ENCODE measurements at regions of chr20 and their contacts with region 1.

Region 1: GRCh38 chr20:5569021-5569420 is 181.2 kb upstream of the SHLD1 start:
- DNase-seq: no peak
- ATAC-seq: peak; percentile 85
- H3K4me3 ChIP-seq: no peak overlapping the region
- H3K27ac ChIP-seq: no peak overlapping the region
- H3K4me1 ChIP-seq: no peaks in the 10 kb centered on the region
- H3K27me3 ChIP-seq: no peaks in the 10 kb centered on the region
- CTCF ChIP-seq: peak; percentile 34 to 62 (median 38); a peak in 5 of 6 replicates
- EP300 ChIP-seq: no peak
- POLR2A ChIP-seq: no peak
- RAD21 ChIP-seq: peak; percentile 78

Region 2: GRCh38 chr20:5400164-5400762 is 168.8 kb before region 1 on chr20:
- CTCF ChIA-PET with region 1: no interaction called
- POLR2A ChIA-PET with region 1: no interaction called
- RAD21 ChIA-PET with region 1: no interaction called
- SMC1A ChIA-PET with region 1: no interaction called
- in situ Hi-C with region 1: no loop called
- intact Hi-C with region 1: no loop called
- DNase-seq: no peak
- ATAC-seq: no peak
- H3K4me3 ChIP-seq: no peak overlapping the region
- H3K27ac ChIP-seq: no peak overlapping the region
- H3K4me1 ChIP-seq: no peaks in the 10 kb centered on the region
- H3K27me3 ChIP-seq: no peaks in the 10 kb centered on the region
- CTCF ChIP-seq: no peak
- EP300 ChIP-seq: no peak
- POLR2A ChIP-seq: no peak
- RAD21 ChIP-seq: no peak

Region 3: DNA sequence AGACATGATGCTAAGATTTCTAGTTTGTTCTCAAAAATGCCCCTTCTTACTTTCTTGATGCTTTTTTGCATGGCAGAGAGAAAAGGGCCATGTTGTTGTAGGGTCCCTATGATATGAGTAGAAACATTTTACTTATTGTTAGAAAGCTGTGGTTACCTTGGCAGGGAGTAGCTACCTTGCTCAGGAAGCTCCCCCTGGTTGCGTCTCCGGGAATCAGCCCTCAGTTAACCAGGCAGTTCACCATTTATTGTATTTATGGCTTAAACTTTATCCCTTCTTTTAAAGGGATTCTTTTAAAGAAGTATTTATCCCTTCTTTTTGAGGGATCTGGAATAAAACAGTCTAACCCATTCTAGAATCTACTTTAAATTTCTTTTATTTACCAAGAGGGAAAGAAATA is 138.4 kb before region 1 on chr20:
- CTCF ChIA-PET with region 1: no interaction called
- POLR2A ChIA-PET with region 1: no interaction called
- RAD21 ChIA-PET with region 1: no interaction called
- SMC1A ChIA-PET with region 1: no interaction called
- in situ Hi-C with region 1: no loop called
- intact Hi-C with region 1: no loop called
- DNase-seq: no peak
- ATAC-seq: no peak
- H3K4me3 ChIP-seq: no peak overlapping the region
- H3K27ac ChIP-seq: no peak overlapping the region
- H3K4me1 ChIP-seq: no peaks in the 10 kb centered on the region
- H3K27me3 ChIP-seq: 0 out of 4 replicates have a peak, but pooled peaks cover 0 to 2% of the 10 kb centered on the region in 2 experiments
- CTCF ChIP-seq: no peak
- EP300 ChIP-seq: no peak
- POLR2A ChIP-seq: no peak
- RAD21 ChIP-seq: no peak

Region 4: DNA sequence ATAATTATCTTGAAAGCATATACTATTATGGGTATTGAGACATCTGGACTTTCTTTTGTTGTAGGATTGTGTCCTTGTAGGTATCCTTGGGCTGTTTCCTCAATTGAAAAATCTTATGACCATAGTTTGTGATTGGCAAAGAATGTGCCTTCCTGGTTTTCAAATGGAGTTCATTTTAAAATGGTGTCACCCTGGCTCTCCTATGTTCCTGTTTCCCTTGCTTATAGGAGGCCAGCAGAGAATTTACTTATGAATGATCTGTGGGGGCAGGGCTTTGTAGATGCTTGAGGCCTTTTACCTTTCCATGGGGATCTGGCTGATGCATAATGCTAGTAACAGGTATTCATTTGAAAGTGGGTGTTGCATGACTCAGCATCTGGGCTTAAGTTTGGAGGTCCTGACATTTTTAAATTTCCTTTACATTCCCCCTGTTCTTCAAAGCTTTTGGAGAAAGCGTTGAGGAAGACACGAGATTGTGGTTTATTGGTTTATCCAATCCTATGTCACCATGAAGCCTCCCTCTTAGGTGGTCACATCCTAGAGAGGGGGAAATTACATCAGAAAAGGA is 117.3 kb before region 1 on chr20:
- CTCF ChIA-PET with region 1: no interaction called
- POLR2A ChIA-PET with region 1: no interaction called
- RAD21 ChIA-PET with region 1: no interaction called
- SMC1A ChIA-PET with region 1: no interaction called
- in situ Hi-C with region 1: no loop called
- intact Hi-C with region 1: no loop called
- DNase-seq: no peak
- ATAC-seq: no peak
- H3K4me3 ChIP-seq: no peak overlapping the region
- H3K27ac ChIP-seq: no peak overlapping the region
- H3K4me1 ChIP-seq: no peaks in the 10 kb centered on the region
- H3K27me3 ChIP-seq: no peaks in the 10 kb centered on the region
- CTCF ChIP-seq: no peak
- EP300 ChIP-seq: no peak
- POLR2A ChIP-seq: no peak
- RAD21 ChIP-seq: no peak

Region 5: GRCh38 chr20:5504061-5504739 is 64.8 kb before region 1 on chr20:
- CTCF ChIA-PET with region 1: no interaction called
- POLR2A ChIA-PET with region 1: no interaction called
- RAD21 ChIA-PET with region 1: no interaction called
- SMC1A ChIA-PET with region 1: no interaction called
- in situ Hi-C with region 1: no loop called
- intact Hi-C with region 1: no loop called
- DNase-seq: no peak
- ATAC-seq: peak; percentile 53
- H3K4me3 ChIP-seq: peak overlapping the region; percentile 31; the same call in 1 of the 2 replicates
- H3K27ac ChIP-seq: no peak overlapping the region
- H3K4me1 ChIP-seq: no peaks in the 10 kb centered on the region
- H3K27me3 ChIP-seq: peaks cover 0 to 1% of the 10 kb centered on the region in 2 experiments; a peak in 1 of 4 replicates
- CTCF ChIP-seq: no peak
- EP300 ChIP-seq: no peak
- POLR2A ChIP-seq: no peak
- RAD21 ChIP-seq: no peak

Region 6: DNA sequence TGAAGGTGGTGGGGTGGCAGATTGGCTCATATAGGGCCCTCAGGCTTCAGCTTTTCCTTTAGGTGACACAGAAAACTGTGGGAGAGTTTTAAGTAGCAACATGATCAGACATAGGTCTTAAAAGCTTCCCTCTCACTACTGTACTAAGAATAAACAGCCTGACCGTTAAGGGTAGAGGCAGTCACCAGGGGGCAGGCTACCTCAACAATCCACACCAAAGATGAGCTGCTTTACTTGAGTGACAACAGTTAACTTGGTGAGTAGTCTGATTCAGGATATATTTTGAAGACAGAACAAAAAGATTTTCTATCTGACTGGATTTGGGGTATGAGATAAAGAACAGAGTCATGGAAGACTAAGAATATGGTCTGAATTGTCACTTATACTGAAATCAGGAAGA is 11.9 kb before region 1 on chr20:
- CTCF ChIA-PET with region 1: interaction called, 57 read pairs
- POLR2A ChIA-PET with region 1: interaction called, 3 read pairs
- RAD21 ChIA-PET with region 1: interaction called, 18 read pairs
- SMC1A ChIA-PET with region 1: interaction called, 81 read pairs
- in situ Hi-C with region 1: no loop called
- intact Hi-C with region 1: no loop called
- DNase-seq: peak; percentile 15
- ATAC-seq: peak; percentile 85
- H3K4me3 ChIP-seq: no peak overlapping the region
- H3K27ac ChIP-seq: no peak overlapping the region; the same call in 1 of the 2 replicates
- H3K4me1 ChIP-seq: no peaks in the 10 kb centered on the region
- H3K27me3 ChIP-seq: no peaks in the 10 kb centered on the region
- CTCF ChIP-seq: peak; percentile 52 to 71 (median 65); a peak in 5 of 6 replicates
- EP300 ChIP-seq: no peak
- POLR2A ChIP-seq: no peak
- RAD21 ChIP-seq: peak; percentile 75

Region 7: GRCh38 chr20:5586720-5587119 is 17.7 kb after region 1 on chr20:
- CTCF ChIA-PET with region 1: interaction called, 16 read pairs
- POLR2A ChIA-PET with region 1: interaction called, 8 read pairs
- RAD21 ChIA-PET with region 1: interaction called, 24 read pairs
- SMC1A ChIA-PET with region 1: interaction called, 27 read pairs
- in situ Hi-C with region 1: no loop called
- intact Hi-C with region 1: no loop called
- DNase-seq: no peak
- ATAC-seq: peak; percentile 56
- H3K4me3 ChIP-seq: no peak overlapping the region
- H3K27ac ChIP-seq: peak overlapping the region; percentile 44
- H3K4me1 ChIP-seq: peaks cover 44% of the 10 kb centered on the region
- H3K27me3 ChIP-seq: no peaks in the 10 kb centered on the region
- CTCF ChIP-seq: no peak
- EP300 ChIP-seq: no peak
- POLR2A ChIP-seq: no peak
- RAD21 ChIP-seq: no peak

Region 8: GRCh38 chr20:5602346-5602745 is 33.3 kb after region 1 on chr20:
- CTCF ChIA-PET with region 1: interaction called, 21 read pairs
- POLR2A ChIA-PET with region 1: interaction called, 8 read pairs
- RAD21 ChIA-PET with region 1: interaction called, 7 read pairs
- SMC1A ChIA-PET with region 1: interaction called, 37 read pairs
- in situ Hi-C with region 1: no loop called
- intact Hi-C with region 1: no loop called
- DNase-seq: no peak
- ATAC-seq: peak; percentile 3
- H3K4me3 ChIP-seq: peak overlapping the region; percentile 49
- H3K27ac ChIP-seq: peak overlapping the region; percentile 98
- H3K4me1 ChIP-seq: peaks cover 38% of the 10 kb centered on the region
- H3K27me3 ChIP-seq: no peaks in the 10 kb centered on the region
- CTCF ChIP-seq: no peak
- EP300 ChIP-seq: no peak
- POLR2A ChIP-seq: no peak
- RAD21 ChIP-seq: no peak

Region 9: DNA sequence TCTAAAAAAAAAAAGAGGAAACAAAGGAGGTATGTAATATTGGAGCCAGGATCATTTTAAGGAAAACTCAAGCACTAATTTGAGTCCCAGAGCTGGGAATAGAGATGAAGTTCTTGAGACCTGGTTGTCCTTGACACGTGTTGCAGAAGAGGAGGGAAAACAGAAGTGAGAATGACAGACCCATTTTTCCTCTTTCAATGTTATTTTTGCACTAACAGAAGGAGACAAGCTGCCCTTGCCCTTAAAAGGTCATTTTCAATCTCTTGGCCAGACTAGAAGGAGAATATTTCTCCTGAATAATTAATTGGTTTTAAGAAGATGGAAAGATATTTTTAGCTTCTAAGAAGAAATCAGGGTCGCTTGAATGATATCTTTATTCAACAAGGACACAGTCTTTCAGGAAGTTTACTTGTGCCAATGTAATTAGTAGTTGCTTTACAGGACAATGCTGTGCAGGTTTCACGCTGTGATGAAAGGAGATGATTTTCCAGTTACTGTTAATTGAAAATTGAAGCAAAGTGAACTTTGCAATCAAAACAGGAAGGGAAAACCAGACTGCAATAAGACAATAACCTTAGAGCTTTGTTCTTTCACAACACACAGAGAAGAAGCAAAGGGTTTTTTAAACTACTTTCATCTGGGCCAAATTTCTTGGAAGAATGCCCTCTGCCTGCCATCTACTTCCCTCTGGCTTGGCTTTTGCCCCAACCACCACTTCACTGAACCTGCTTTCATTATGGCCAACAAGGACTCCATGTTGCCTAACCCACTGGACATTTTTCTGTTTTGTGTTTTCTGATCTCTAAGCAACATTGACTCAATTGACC is 73.3 kb after region 1 on chr20:
- CTCF ChIA-PET with region 1: interaction called, 7 read pairs
- POLR2A ChIA-PET with region 1: interaction called, 6 read pairs
- RAD21 ChIA-PET with region 1: interaction called, 5 read pairs
- SMC1A ChIA-PET with region 1: interaction called, 33 read pairs
- in situ Hi-C with region 1: no loop called
- intact Hi-C with region 1: no loop called
- DNase-seq: no peak
- ATAC-seq: no peak
- H3K4me3 ChIP-seq: no peak overlapping the region
- H3K27ac ChIP-seq: peak overlapping the region; percentile 75
- H3K4me1 ChIP-seq: peaks cover 48% of the 10 kb centered on the region
- H3K27me3 ChIP-seq: no peaks in the 10 kb centered on the region
- CTCF ChIP-seq: no peak
- EP300 ChIP-seq: no peak
- POLR2A ChIP-seq: no peak
- RAD21 ChIP-seq: no peak

Region 10: DNA sequence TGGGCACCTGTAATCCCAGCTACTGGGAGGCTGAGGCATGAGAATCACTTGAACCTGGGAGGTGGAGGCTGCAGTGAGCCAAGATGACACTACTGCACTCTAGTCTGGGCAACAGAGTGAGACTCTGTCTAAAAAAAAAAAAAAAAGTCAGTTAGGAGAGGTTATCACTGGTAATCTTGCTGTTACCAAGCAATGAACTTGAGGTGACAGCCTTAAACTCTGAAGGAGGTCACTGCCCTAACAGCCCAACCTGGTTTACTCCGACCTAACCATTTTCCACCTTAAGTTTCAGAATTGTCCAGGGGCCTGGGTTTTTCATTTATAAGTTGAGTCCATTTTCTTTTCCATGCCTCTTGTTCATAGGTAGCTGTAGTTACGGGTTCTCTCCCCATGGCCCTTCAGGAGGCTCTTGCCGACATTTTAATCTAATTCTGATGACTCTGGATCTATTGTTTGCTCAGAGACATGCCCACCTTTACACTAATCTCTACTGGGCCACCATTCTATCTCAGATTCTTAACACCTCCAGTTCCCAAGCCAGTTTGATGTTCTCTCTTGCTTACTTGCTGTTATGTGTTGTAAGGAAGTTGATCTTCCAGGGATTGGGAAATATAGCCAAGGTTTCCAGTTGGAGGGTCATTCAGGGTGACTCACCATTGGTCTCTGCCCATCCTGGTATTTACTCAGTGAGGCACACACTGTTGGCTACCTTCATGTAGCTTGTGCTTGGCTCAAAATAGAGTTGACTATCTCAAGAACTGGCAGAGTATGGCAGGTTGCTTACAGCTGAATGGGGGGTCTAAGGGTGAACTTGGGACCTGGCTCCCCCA is 210.3 kb after region 1 on chr20:
- CTCF ChIA-PET with region 1: interaction called, 7 read pairs
- POLR2A ChIA-PET with region 1: interaction called, 3 read pairs
- RAD21 ChIA-PET with region 1: interaction called, 4 read pairs
- SMC1A ChIA-PET with region 1: interaction called, 5 read pairs
- in situ Hi-C with region 1: no loop called
- intact Hi-C with region 1: loop called (anchors 2 kb)
- DNase-seq: no peak
- ATAC-seq: no peak
- H3K4me3 ChIP-seq: no peak overlapping the region
- H3K27ac ChIP-seq: no peak overlapping the region
- H3K4me1 ChIP-seq: peaks cover 7% of the 10 kb centered on the region
- H3K27me3 ChIP-seq: no peaks in the 10 kb centered on the region
- CTCF ChIP-seq: no peak
- EP300 ChIP-seq: no peak
- POLR2A ChIP-seq: no peak
- RAD21 ChIP-seq: no peak